Left lung (tissue), 14 donors: ENCODE measurements at regions of chr2 and their contacts with region 1.

Region 1: GRCh38 chr2:85428343-85428881 is 9.9 kb downstream of the SH2D6 start:
- DNase-seq: no peak
- ATAC-seq: peak; percentile 20
- H3K4me3 ChIP-seq: no peak overlapping the region
- H3K27ac ChIP-seq: peak overlapping the region in 1 of 2 donors; percentile 43
- H3K4me1 ChIP-seq: peaks cover under 1 to 26% of the 10 kb centered on the region in 2 donors
- H3K27me3 ChIP-seq: no peaks in the 10 kb centered on the region
- CTCF ChIP-seq: no peak

Region 2: DNA sequence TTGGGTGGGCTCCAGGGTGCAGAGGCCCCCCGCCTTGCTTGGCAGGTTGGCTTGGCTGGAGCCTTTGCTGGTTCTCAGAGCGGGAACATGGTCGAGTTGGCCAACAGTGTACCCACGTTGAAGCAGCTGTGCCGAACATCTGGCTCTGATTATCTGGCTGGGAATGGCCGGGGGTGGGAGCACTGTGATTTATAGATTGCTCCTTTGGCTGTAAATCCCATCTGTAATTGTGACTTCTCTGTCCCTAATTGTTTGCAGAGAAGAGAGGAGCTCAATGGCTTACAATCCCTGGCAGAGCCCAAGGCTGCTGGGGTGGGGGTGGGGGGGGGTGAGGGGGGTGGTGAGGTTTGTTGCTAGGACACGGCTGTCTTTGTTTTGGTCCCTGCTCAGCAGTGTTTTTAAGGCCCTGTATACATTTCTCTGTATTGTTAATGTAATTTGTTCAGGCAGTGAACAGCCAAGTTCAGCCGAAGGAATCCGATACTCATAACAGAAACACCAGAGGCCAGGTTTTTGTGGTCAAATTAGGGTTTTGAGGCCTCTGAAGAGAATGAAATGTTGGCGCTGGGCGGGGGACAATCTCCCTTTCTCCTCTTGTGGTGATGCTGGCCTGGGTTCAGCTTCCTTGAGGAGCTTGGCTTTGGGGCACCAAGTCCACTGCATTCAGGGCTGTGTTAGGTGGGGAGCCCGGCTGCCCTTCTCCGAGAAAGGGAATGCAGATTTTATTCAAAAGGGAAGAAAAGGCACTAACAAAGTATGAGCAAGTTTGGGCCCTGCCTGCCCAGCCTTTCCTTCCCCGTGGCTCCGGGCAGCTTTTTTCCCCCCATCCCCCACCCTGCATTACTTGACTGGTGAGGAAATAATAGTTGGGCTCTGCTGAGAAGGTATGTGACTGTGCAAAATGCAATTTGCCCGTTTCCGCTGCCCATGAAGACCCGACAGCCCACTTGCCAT is 212.7 kb before region 1 on chr2:
- intact Hi-C with region 1: no loop called
- DNase-seq: peak in 2 of 4 donors; percentile 57 to 76
- ATAC-seq: peak; percentile 60
- H3K4me3 ChIP-seq: no peak overlapping the region
- H3K27ac ChIP-seq: peak overlapping the region; percentile 23 to 26
- H3K4me1 ChIP-seq: peaks cover 0 to 4% of the 10 kb centered on the region in 2 donors
- H3K27me3 ChIP-seq: no peaks in the 10 kb centered on the region
- CTCF ChIP-seq: no peak

Region 3: GRCh38 chr2:85340034-85340892 is 88.1 kb before region 1 on chr2:
- intact Hi-C with region 1: no loop called
- DNase-seq: peak in 1 of 4 donors; percentile 48
- ATAC-seq: peak; percentile 82
- H3K4me3 ChIP-seq: no peak overlapping the region
- H3K27ac ChIP-seq: no peak overlapping the region
- H3K4me1 ChIP-seq: no peaks in the 10 kb centered on the region
- H3K27me3 ChIP-seq: no peaks in the 10 kb centered on the region
- CTCF ChIP-seq: no peak

Region 4: DNA sequence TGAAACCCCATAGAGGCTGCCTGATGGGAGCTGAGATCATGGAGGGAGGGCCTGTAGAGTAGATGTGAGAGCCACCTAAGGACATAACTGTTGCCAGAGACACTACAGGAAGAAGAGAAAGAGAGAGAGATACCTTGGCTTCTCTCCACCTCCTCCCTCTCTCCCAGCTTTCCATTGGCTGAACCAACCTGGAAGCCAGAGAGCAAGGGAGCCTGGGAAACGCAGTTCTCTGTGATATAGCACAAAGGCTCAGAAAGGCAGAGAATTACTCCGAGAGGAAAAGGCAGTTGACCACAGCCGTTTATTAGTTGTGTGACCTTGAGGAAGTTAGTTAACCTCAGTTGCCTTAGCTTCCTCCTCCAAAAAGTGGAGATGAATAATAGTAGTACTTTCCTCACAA is 72.8 kb after region 1 on chr2:
- intact Hi-C with region 1: no loop called
- DNase-seq: no peak
- ATAC-seq: no peak
- H3K4me3 ChIP-seq: no peak overlapping the region
- H3K27ac ChIP-seq: peak overlapping the region in 1 of 2 donors; percentile 82
- H3K4me1 ChIP-seq: peaks cover 15 to 46% of the 10 kb centered on the region in 2 donors
- H3K27me3 ChIP-seq: no peaks in the 10 kb centered on the region
- CTCF ChIP-seq: no peak

Region 5: DNA sequence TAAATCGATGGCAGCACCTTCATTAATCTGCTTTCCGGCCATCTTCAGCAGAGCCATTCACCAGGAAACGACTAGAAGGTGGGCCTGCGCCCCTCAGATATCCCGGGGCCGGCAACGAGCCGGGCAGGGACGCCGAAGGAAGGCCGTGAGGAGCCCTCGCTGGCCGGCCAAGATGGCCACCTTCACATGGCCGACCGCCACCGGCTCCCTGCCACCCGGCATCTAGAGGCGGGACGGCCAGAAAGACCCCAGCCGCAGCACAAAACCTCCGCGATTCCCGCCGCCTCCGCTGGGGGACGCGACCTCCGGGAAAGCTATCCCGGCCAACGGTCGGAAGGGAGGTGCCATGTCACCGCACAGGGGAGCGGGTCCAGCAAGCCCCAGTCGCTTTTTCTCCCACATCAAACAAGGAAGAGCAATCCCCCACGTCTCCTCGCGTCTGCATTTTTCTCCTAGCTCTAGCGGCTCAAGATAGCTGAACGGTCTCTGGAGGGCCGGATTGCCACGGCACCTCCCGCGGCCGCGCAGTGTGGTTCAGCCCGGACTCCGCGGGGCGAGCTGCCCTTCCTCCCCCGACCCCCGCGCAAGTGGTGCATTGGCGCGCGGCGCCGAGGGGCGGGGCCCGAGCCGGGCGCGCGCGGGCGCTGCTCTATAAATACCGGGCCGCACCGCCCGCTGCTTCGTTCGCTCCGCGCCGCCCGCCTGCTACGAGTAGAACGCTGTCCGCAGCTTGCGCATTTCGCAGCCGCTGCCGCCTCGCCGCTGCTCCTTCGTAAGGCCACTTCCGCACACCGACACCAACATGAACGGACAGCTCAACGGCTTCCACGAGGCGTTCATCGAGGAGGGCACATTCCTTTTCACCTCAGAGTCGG is 110.3 kb after region 1 on chr2 and contains the start of gene MAT2A:
- intact Hi-C with region 1: loop called in 1 of 2 experiments (anchors 5 kb)
- DNase-seq: peak; percentile 92 to 98 (median 97)
- ATAC-seq: peak; percentile 90
- H3K4me3 ChIP-seq: peak within 1 kb of the TSS; percentile 99
- H3K27ac ChIP-seq: peak within 1 kb of the TSS; percentile 99
- H3K4me1 ChIP-seq: peaks cover 24 to 72% of the 10 kb centered on the region in 2 donors
- H3K27me3 ChIP-seq: no peaks in the 10 kb centered on the region
- CTCF ChIP-seq: peak; percentile 58 to 76
- polyA plus RNA-seq, gene MAT2A: 287 to 341 (median 313) TPM